ENCODE measurements at regions of chr12 and their contacts with region 1.

Region 1: DNA sequence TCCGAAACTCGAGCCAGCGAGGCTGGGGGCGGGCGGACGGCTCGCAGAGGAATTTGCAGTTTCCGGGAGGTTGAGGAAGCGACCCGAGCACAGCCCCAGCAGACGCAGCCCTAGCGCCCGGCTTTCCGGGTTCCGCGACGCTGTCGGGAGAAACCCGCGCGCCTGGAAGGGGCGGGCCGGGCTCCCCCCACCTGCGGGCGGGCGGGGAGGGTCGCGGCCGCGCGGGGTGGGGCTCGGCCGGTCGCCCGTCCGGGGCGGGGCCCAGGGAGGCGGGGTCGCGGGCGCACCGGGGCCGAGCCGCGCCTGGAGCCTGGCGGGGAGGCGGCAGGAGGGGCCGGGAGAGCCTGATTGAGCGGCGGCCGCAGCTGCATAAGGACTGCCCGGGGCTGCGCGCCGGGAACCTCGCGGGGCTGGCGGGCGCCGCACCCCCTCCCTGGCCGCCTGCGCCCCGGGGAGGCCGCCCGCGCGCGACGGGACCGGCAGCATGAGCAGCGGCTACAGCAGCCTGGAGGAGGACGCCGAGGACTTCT is at the start of gene RASSF3:
- DNase-seq: no peak
- ATAC-seq: peak; percentile 54
- H3K4me3 ChIP-seq: peak within 1 kb of the TSS; percentile 99
- H3K27ac ChIP-seq: peak within 1 kb of the TSS; percentile 83
- H3K4me1 ChIP-seq: peaks cover 17% of the 10 kb centered on the region; the same call in 1 of the 2 replicates
- H3K27me3 ChIP-seq: no peaks in the 10 kb centered on the region
- CTCF ChIP-seq: no peak
- EP300 ChIP-seq: no peak
- POLR2A ChIP-seq: peak; percentile 74
- RAD21 ChIP-seq: no peak
- polyA plus RNA-seq, gene RASSF3: 9.0 to 11.2 TPM

Region 2: DNA sequence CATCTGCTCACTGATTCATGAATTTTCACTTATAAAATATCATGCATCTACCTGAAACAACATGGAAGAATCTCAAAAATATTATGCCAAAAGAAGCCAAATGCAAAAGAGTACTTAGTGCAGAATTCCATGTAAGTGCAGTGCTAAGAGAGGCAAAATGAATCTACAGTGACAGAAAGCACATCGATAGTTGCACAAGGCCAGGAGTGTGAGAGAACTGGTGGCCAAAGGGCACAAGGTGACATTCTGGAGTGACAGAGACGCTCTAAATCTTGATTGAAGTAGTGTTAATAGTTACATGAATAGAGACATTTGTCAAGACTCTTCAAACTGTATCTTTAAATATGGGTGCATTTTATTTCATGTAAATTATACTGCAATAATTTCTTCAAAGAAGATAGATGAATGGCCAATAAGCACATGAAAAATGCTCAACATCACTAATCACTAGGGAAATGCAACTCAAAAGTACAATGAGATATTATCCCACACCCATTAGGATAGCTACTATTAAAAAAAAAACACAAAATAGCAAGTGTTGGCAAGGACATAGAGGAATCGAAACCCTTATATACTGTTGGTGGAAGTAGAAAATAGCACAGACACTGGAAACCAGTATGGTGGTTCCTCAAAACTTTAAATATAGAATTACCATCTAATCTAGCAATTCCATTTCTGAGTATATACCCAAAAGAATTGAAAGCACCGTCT is 316.4 kb before region 1 on chr12:
- CTCF ChIA-PET with region 1: no interaction called
- POLR2A ChIA-PET with region 1: no interaction called
- RAD21 ChIA-PET with region 1: no interaction called
- SMC1A ChIA-PET with region 1: no interaction called
- in situ Hi-C with region 1: no loop called
- intact Hi-C with region 1: no loop called
- DNase-seq: no peak
- ATAC-seq: peak; percentile 65
- H3K4me3 ChIP-seq: no peak overlapping the region
- H3K27ac ChIP-seq: no peak overlapping the region
- H3K4me1 ChIP-seq: peaks cover 13% of the 10 kb centered on the region
- H3K27me3 ChIP-seq: no peaks in the 10 kb centered on the region
- CTCF ChIP-seq: no peak
- EP300 ChIP-seq: no peak
- POLR2A ChIP-seq: no peak
- RAD21 ChIP-seq: no peak

Region 3: DNA sequence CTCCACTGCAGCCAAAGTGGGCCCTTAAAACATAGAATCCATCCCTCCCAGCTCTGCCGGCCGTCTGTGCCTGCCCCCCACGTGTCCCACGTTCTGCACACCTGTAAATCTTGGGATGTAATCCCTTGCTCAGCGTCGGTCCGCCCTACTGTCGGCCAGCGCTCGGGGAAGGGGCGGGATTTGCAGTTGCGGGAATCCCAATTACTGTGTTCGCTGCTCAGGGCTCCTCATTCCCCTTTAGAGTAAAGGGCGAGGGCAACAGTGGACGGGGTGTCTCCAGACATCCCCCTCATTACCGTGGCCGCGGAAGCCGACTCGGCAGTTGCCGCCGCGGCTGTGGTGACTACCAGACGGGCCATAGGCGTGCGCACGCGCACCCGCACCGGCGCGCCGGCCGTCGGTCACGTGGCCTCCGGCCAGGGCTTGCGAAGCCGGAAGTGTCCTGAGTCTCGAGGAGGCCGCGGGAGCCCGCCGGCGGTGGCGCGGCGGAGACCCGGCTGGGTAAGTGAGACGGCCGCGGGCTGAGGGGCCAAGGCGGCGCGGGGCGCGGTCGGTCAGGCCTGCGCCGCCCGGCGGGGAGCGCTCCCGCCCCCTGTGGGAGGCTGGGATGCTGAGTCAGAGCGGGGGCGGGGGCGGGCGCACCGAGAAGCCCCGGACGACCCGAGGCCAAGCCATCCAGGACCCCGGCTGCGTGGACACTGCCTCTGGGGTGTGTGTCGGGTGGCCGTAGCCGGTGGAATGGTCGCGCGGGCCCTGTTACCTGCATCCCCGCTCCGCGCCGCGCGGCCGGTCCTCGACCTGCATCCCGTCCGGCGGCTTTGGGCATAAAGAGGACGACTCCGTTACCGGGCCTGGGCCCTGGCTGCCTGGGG is 158.3 kb before region 1 on chr12 and contains the start of gene TBK1:
- CTCF ChIA-PET with region 1: no interaction called
- POLR2A ChIA-PET with region 1: interaction called, 5 read pairs
- RAD21 ChIA-PET with region 1: no interaction called
- SMC1A ChIA-PET with region 1: no interaction called
- in situ Hi-C with region 1: no loop called
- intact Hi-C with region 1: loop called (anchors 5 kb)
- DNase-seq: peak; percentile 53
- ATAC-seq: peak; percentile 92
- H3K4me3 ChIP-seq: peak within 1 kb of the TSS; percentile 97
- H3K27ac ChIP-seq: peak within 1 kb of the TSS; percentile 88
- H3K4me1 ChIP-seq: peaks cover 1% of the 10 kb centered on the region; the same call in 1 of the 2 replicates
- H3K27me3 ChIP-seq: no peaks in the 10 kb centered on the region
- CTCF ChIP-seq: no peak
- EP300 ChIP-seq: no peak
- POLR2A ChIP-seq: peak; percentile 83
- RAD21 ChIP-seq: no peak
- polyA plus RNA-seq, gene TBK1: 13.4 to 18.0 TPM

Region 4: GRCh38 chr12:64518396-64518795 is 91.8 kb before region 1 on chr12:
- CTCF ChIA-PET with region 1: no interaction called
- POLR2A ChIA-PET with region 1: no interaction called
- RAD21 ChIA-PET with region 1: no interaction called
- SMC1A ChIA-PET with region 1: no interaction called
- in situ Hi-C with region 1: no loop called
- intact Hi-C with region 1: no loop called
- DNase-seq: no peak
- ATAC-seq: no peak
- H3K4me3 ChIP-seq: no peak overlapping the region
- H3K27ac ChIP-seq: no peak overlapping the region
- H3K4me1 ChIP-seq: no peaks in the 10 kb centered on the region; the same call in 1 of the 2 replicates
- H3K27me3 ChIP-seq: peaks cover 0 to 2% of the 10 kb centered on the region in 2 experiments; a peak in 1 of 4 replicates
- CTCF ChIP-seq: no peak
- EP300 ChIP-seq: no peak
- POLR2A ChIP-seq: no peak
- RAD21 ChIP-seq: no peak

Region 5: DNA sequence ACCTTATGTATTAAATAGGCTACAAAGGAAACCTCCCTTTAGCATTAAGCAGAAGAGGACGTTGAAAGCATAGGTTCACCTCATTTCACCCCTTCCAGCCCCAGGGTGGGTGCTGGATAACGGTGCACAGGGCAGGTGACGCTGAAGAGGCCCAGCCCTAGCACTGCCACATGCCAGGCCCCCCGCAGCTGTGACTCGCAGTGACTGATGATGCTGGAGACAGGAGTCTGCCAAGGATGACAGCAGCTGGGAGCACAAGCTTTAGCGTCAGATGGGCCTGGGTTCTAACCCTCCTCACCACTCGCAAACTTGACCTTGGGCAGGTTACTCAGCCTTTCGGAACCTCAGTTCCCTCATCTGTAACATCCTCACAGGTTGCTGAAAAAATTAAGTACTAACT is 81.6 kb before region 1 on chr12:
- CTCF ChIA-PET with region 1: no interaction called
- POLR2A ChIA-PET with region 1: no interaction called
- RAD21 ChIA-PET with region 1: no interaction called
- SMC1A ChIA-PET with region 1: no interaction called
- in situ Hi-C with region 1: no loop called
- intact Hi-C with region 1: no loop called
- DNase-seq: no peak
- ATAC-seq: no peak
- H3K4me3 ChIP-seq: no peak overlapping the region
- H3K27ac ChIP-seq: no peak overlapping the region
- H3K4me1 ChIP-seq: no peaks in the 10 kb centered on the region
- H3K27me3 ChIP-seq: no peaks in the 10 kb centered on the region
- CTCF ChIP-seq: no peak
- EP300 ChIP-seq: no peak
- POLR2A ChIP-seq: no peak
- RAD21 ChIP-seq: no peak

Region 6: GRCh38 chr12:64625243-64626077 is 15.2 kb after region 1 on chr12:
- CTCF ChIA-PET with region 1: interaction called, 12 read pairs
- POLR2A ChIA-PET with region 1: interaction called, 88 read pairs
- RAD21 ChIA-PET with region 1: interaction called, 86 read pairs
- SMC1A ChIA-PET with region 1: interaction called, 15 read pairs
- in situ Hi-C with region 1: no loop called
- intact Hi-C with region 1: loop called (anchors 2 kb)
- DNase-seq: peak; percentile 78
- ATAC-seq: peak; percentile 64
- H3K4me3 ChIP-seq: peak overlapping the region; percentile 66
- H3K27ac ChIP-seq: peak overlapping the region; percentile 98
- H3K4me1 ChIP-seq: peaks cover 39% of the 10 kb centered on the region
- H3K27me3 ChIP-seq: no peaks in the 10 kb centered on the region
- CTCF ChIP-seq: 0 out of 6 replicates have a peak, but pooled peaks of 1 of the 3 experiments have one; percentile 6
- EP300 ChIP-seq: peak in 1 of 2 experiments; percentile 76; a peak in 2 of 4 replicates
- POLR2A ChIP-seq: peak; percentile 44; the same call in 1 of the 2 replicates
- RAD21 ChIP-seq: no peak

Region 7: DNA sequence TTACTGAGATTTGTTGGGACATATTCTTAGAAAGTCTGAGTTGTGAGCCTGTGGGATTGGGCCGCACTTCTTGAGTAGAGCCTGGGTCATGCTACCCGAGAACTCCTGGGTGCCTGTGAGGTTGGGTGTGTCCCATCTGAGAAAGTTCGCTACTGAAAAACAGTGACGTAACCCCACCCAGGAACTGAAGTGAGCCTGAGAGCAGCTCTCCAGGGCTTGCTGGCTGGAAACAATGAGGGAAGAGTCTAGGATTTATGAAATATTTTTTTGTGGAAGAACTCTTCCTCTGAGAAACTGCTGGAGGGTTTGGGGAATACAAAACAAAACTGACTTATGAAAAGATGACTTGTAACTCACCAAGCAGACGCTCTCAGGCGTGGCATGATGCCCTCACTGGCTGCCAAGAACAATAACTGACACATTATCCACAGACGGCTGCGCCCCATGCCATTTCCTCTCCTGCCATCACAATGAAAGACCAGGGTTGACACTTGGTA is 69.3 kb after region 1 on chr12:
- CTCF ChIA-PET with region 1: interaction called, 4 read pairs
- POLR2A ChIA-PET with region 1: interaction called, 3 read pairs
- RAD21 ChIA-PET with region 1: interaction called, 9 read pairs
- SMC1A ChIA-PET with region 1: interaction called, 11 read pairs
- in situ Hi-C with region 1: no loop called
- intact Hi-C with region 1: no loop called
- DNase-seq: no peak
- ATAC-seq: peak; percentile 53
- H3K4me3 ChIP-seq: no peak overlapping the region
- H3K27ac ChIP-seq: peak overlapping the region; percentile 35; the same call in 1 of the 2 replicates
- H3K4me1 ChIP-seq: peaks cover 53% of the 10 kb centered on the region
- H3K27me3 ChIP-seq: no peaks in the 10 kb centered on the region
- CTCF ChIP-seq: no peak
- EP300 ChIP-seq: no peak
- POLR2A ChIP-seq: no peak
- RAD21 ChIP-seq: no peak

Region 8: DNA sequence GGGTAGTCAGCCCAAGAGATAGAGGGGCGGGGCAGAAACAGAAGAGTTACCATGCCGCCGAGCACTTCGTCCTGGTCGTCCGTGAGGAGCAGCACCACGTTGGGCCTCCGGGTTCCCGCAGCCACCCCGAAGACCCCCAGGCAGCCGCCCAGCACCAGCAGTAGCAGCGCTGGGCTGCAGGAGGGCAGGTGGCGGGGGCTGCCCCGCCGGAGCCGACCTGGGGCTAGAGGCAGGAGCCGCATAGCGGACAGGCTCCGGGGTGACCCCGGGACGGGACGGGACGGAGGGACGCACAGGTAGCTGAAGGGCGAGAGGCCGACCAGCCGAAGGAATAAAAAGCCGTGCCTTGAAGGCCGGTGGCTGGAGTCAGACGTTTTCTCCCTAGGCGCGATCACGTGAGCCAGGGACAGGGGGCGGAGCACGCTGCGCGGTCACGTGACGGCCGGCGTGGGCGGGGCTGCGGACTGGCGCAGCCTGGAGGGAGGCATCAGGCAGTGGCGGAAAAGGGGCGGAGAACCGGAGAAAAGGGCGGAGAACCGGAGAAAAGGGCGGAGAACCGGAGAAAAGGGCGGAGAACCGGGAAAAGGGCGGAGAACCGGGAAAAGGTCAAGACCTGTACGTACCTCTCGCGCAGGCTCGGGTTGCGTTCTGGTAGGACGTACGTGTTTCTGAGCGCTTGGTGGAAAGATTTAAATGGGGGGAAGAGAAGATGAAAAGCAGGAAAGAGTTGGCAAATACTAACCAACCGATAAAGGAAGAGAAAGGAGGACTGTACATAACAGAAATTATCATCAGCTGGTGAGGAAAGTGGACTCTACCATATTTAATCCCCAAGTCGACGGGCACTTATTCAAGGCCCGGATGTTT is 149.1 kb after region 1 on chr12 and contains the start of gene GNS:
- CTCF ChIA-PET with region 1: interaction called, 3 read pairs
- POLR2A ChIA-PET with region 1: no interaction called
- RAD21 ChIA-PET with region 1: no interaction called
- SMC1A ChIA-PET with region 1: no interaction called
- in situ Hi-C with region 1: no loop called
- intact Hi-C with region 1: loop called (anchors 5 kb)
- DNase-seq: peak; percentile 85
- ATAC-seq: peak; percentile 90
- H3K4me3 ChIP-seq: peak within 1 kb of the TSS; percentile 87
- H3K27ac ChIP-seq: peak within 1 kb of the TSS; percentile 65
- H3K4me1 ChIP-seq: peaks cover 8% of the 10 kb centered on the region
- H3K27me3 ChIP-seq: no peaks in the 10 kb centered on the region
- CTCF ChIP-seq: no peak
- EP300 ChIP-seq: no peak
- POLR2A ChIP-seq: peak; percentile 81
- RAD21 ChIP-seq: no peak
- polyA plus RNA-seq, gene GNS: 4.1 to 4.4 TPM

Region 9: DNA sequence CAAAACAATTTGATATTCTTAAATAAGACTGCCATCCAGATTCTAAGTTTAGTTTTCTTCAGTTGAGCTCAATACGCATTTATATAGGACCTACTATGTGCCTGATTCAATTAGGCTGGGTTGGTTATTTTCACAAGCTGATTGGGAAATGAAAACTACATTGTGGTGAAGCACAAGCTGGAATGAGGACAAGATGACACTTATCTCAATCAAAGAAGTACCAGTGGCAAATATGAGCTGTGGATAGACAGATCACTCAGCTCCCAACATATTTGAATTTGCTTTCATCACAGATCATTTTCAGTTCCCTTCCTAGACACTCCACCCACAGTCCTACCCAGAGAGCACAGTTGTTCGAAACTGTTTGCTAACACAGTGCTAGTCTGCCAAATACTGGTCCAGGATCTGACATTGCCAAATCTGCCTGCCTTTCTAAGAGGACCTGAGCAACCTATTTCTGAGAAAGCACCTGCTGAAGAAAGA is 1445.7 kb after region 1 on chr12:
- CTCF ChIA-PET with region 1: no interaction called
- POLR2A ChIA-PET with region 1: no interaction called
- RAD21 ChIA-PET with region 1: no interaction called
- SMC1A ChIA-PET with region 1: no interaction called
- in situ Hi-C with region 1: no loop called
- intact Hi-C with region 1: loop called (anchors 10 kb)
- DNase-seq: peak; percentile 76
- ATAC-seq: peak; percentile 89
- H3K4me3 ChIP-seq: no peak overlapping the region
- H3K27ac ChIP-seq: peak overlapping the region; percentile 54
- H3K4me1 ChIP-seq: peaks cover 25% of the 10 kb centered on the region
- H3K27me3 ChIP-seq: no peaks in the 10 kb centered on the region
- CTCF ChIP-seq: no peak
- EP300 ChIP-seq: peak; percentile 89 to 98; a peak in 3 of 4 replicates
- POLR2A ChIP-seq: no peak
- RAD21 ChIP-seq: no peak